Gastrocnemius medialis (tissue), 4 donors: ENCODE measurements at regions of chr10 and their contacts with region 1.

Region 1: GRCh38 chr10:72319416-72320254 is 35.1 kb downstream of the DNAJB12 start:
- DNase-seq: peak; percentile 90 to 93
- ATAC-seq: peak; percentile 50 to 59
- H3K4me3 ChIP-seq: peak overlapping the region; percentile 45 to 60 (median 48)
- H3K27ac ChIP-seq: peak overlapping the region; percentile 92 to 97 (median 96)
- H3K4me1 ChIP-seq: peaks cover 61 to 69% of the 10 kb centered on the region in 2 donors
- H3K27me3 ChIP-seq: no peaks in the 10 kb centered on the region
- CTCF ChIP-seq: no peak
- POLR2A ChIP-seq: peak; percentile 67 to 82

Region 2: DNA sequence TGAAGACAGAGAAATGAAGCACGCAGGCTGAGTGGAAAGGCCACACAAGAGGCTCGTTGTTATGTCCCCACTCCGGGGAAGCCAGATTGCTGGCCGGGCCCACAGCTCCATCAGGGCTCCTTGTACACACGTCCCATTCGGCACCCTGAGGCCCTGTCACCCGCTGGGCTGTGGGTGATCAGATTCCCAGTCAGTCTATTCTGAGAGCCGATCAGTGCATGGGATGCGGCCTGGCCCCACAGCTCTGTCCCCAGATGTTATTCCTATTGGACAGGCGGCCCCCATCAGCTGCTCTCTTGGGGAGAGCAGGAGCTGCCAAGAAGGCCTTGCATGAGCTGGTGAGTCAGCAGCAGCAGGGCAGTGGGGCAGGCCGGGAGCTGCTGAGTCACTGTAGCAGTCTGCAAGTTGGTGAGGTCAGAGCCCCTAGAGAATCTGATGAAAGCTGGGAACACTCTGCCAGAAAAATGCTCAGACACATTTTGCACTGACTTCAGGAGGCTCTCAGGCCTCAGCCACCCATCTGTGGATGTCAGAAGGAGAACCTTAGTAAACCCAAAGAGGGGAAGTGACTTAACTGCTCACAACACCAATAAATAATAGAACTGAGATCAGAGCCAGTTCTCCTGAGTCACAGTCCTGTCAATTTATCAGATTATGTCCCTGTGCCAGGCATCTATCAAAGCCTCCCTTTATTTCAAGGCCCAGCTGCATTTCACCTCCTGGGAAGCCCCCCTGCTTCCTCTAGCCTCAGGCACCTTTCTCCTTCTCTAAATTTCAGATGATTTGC is 459.2 kb before region 1 on chr10:
- in situ Hi-C with region 1: no loop called
- intact Hi-C with region 1: loop called (anchors 10 kb)
- DNase-seq: peak; percentile 99 to 100
- ATAC-seq: peak; percentile 91 to 93
- H3K4me3 ChIP-seq: peak overlapping the region in 2 of 4 donors; percentile 13 to 30
- H3K27ac ChIP-seq: peak overlapping the region; percentile 89 to 99 (median 97)
- H3K4me1 ChIP-seq: peaks cover 23 to 24% of the 10 kb centered on the region in 2 donors
- H3K27me3 ChIP-seq: no peaks in the 10 kb centered on the region
- CTCF ChIP-seq: no peak
- POLR2A ChIP-seq: peak; percentile 71 to 80

Region 3: GRCh38 chr10:72215652-72216549 is 103.7 kb before region 1 on chr10 and contains the starts of genes ANAPC16 and ASCC1:
- in situ Hi-C with region 1: loop called in 1 of 4 experiments (anchors 5 kb)
- intact Hi-C with region 1: no loop called
- DNase-seq: peak; percentile 83 to 89
- ATAC-seq: peak; percentile 92 to 94
- H3K4me3 ChIP-seq: peak within 1 kb of the TSS; percentile 72 to 91 (median 81)
- H3K27ac ChIP-seq: peak within 1 kb of the TSS; percentile 94 to 99 (median 98)
- H3K4me1 ChIP-seq: peaks cover 55 to 56% of the 10 kb centered on the region in 2 donors
- H3K27me3 ChIP-seq: no peaks in the 10 kb centered on the region
- CTCF ChIP-seq: no peak
- POLR2A ChIP-seq: peak; percentile 91 to 96
- total RNA-seq, gene ANAPC16: 70.9 to 168 (median 105) TPM
- total RNA-seq, gene ASCC1: 26.1 to 31.1 (median 29.6) TPM

Region 4: GRCh38 chr10:72229261-72230251 is 90.1 kb before region 1 on chr10:
- in situ Hi-C with region 1: loop called in 2 of 4 experiments (anchors 5 to 10 kb)
- intact Hi-C with region 1: no loop called
- DNase-seq: peak; percentile 75 to 79
- ATAC-seq: peak; percentile 82 to 84
- H3K4me3 ChIP-seq: no peak overlapping the region
- H3K27ac ChIP-seq: peak overlapping the region; percentile 94 to 99 (median 98)
- H3K4me1 ChIP-seq: peaks cover 55 to 71% of the 10 kb centered on the region in 2 donors
- H3K27me3 ChIP-seq: no peaks in the 10 kb centered on the region
- CTCF ChIP-seq: no peak
- POLR2A ChIP-seq: peak; percentile 60 to 63

Region 5: GRCh38 chr10:72308320-72308987 is 11.2 kb before region 1 on chr10:
- in situ Hi-C with region 1: no loop called
- intact Hi-C with region 1: loop called (anchors 1 kb)
- DNase-seq: peak; percentile 64 to 75
- ATAC-seq: peak; percentile 38 to 46
- H3K4me3 ChIP-seq: no peak overlapping the region
- H3K27ac ChIP-seq: peak overlapping the region; percentile 93 to 97 (median 96)
- H3K4me1 ChIP-seq: peaks cover 50 to 65% of the 10 kb centered on the region in 2 donors
- H3K27me3 ChIP-seq: no peaks in the 10 kb centered on the region
- CTCF ChIP-seq: peak in 1 of 5 experiments; percentile 9
- POLR2A ChIP-seq: peak; percentile 39 to 43